ENCODE measurements at regions of chr10 and their contacts with region 1.

Region 1: GRCh38 chr10:73529089-73529832 is 33.4 kb upstream of the PPP3CB start:
- DNase-seq: peak; percentile 39 to 73 (median 46)
- ATAC-seq: peak; percentile 82
- H3K4me3 ChIP-seq: no peak overlapping the region
- H3K27ac ChIP-seq: no peak overlapping the region
- H3K4me1 ChIP-seq: no peaks in the 10 kb centered on the region
- H3K27me3 ChIP-seq: no peaks in the 10 kb centered on the region
- CTCF ChIP-seq: peak; percentile 64 to 88 (median 82)
- POLR2A ChIP-seq: no peak

Region 2: DNA sequence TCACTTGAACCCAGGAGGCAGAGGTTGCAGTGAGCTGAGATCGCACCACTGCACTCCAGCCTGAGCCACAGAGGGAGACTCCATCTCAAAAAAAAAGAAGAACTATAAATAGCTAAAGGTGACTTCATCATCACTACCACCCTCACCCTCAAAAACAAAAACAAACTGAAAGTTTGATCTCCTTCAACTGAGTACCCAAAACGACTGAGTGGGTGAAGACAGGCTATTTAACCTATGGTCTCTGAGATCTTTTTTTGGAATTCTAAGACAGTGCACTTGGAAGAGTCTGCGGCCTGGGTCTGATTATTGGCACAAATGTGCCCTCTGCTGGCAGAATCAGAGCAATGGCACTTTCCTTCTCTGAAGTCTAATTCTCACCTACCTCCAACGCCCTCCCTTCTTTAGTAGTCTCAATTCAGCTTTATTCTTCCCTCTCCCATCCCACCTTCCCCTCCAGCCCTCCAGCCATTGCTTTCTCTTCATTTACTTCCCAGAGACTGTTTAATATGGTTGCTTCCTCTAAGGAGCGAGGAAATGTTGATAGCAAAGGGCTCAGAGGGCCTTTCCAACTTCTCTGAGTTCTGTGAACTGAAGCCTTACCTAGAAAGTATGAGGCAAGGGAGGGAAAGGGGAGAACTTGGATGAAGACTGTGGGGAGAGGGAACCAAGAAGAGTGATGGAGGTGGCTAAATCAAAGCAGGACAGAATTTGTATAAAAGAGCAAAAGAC is 114.9 kb after region 1 on chr10:
- intact Hi-C with region 1: loop called (anchors 5 kb)
- DNase-seq: peak; percentile 63 to 75 (median 67)
- ATAC-seq: peak; percentile 79
- H3K4me3 ChIP-seq: no peak overlapping the region
- H3K27ac ChIP-seq: no peak overlapping the region
- H3K4me1 ChIP-seq: peaks cover 20% of the 10 kb centered on the region
- H3K27me3 ChIP-seq: no peaks in the 10 kb centered on the region
- CTCF ChIP-seq: peak; percentile 69 to 97 (median 95)
- POLR2A ChIP-seq: no peak